Colonic mucosa (tissue), 4 donors: ENCODE measurements at regions of chr15 and their contacts with region 1.

Region 1: DNA sequence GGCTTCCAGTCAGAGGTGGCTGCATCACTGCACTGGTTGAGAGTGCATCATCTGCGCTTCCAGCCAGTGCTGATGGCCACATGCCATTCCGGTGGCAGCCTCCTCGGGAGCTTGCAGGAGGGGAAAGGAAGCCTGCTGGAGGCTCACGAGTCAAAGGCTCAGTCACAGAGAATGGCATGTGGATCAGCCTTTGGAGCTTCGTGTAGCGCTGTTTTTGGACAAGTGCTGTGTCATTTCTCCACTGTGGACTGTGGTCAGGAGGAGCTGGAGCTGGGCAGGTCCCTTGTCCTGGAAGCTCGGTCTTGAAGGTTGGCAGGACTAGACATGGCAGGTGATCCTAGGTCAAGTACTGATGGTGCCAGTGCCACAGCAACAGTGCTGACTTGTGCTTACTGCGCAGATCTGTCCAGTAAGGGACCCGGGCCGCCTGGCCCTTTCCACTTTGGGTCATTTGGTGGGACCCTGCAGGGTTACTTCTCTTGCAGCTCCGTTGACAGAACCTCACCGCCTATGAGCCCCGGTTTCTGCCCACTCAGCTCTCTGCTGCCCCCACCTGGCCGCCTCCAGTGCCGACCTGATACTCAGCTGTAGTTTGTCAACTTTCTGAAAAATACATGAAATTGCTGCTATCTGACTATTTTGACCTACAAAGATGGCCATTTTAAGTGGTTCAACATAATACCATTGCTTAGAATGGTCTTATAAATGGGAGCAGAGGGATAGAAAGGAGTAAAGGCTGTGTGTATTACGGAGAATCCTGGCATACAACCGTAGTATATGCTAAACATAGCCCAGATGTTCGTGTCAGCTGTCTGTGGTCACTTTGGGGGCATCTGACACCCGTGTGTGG is 27.6 kb upstream of the TRPM1 start:
- DNase-seq: peak; percentile 81
- H3K4me3 ChIP-seq: no peak overlapping the region
- H3K27ac ChIP-seq: no peak overlapping the region
- H3K4me1 ChIP-seq: no peaks in the 10 kb centered on the region
- H3K27me3 ChIP-seq: no peaks in the 10 kb centered on the region
- CTCF ChIP-seq: peak; percentile 90

Region 2: DNA sequence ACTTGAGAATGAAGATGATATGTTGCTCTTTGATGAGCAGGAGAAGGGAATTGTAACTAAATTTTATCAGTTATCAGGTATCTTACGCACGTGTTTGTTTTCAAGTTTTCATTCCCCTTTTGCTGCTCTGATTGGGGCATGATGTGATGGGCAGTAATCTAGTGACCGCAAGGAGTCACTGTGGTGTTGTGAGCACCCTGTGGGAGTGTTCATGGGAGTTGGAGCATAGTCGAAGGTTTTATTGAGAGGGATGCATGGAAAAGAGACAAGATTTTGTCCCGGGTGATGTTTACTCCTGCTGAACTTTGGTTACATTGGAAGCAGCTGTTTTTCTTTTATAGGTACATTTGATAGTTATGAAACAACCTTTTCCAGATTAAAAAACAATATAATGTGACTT is 223.3 kb before region 1 on chr15:
- intact Hi-C with region 1: loop called (anchors 5 kb)
- DNase-seq: peak; percentile 63
- H3K4me3 ChIP-seq: no peak overlapping the region
- H3K27ac ChIP-seq: peak overlapping the region; percentile 30
- H3K4me1 ChIP-seq: no peaks in the 10 kb centered on the region
- H3K27me3 ChIP-seq: no peaks in the 10 kb centered on the region
- CTCF ChIP-seq: peak; percentile 17

Region 3: GRCh38 chr15:30985081-30985531 is 144.0 kb before region 1 on chr15:
- intact Hi-C with region 1: loop called (anchors 10 kb)
- DNase-seq: no peak
- H3K4me3 ChIP-seq: no peak overlapping the region
- H3K27ac ChIP-seq: no peak overlapping the region
- H3K4me1 ChIP-seq: peaks cover 11% of the 10 kb centered on the region
- H3K27me3 ChIP-seq: no peaks in the 10 kb centered on the region
- CTCF ChIP-seq: no peak

Region 4: GRCh38 chr15:31280046-31280830 is 151.1 kb after region 1 on chr15:
- intact Hi-C with region 1: no loop called
- DNase-seq: peak; percentile 22
- H3K4me3 ChIP-seq: no peak overlapping the region
- H3K27ac ChIP-seq: no peak overlapping the region
- H3K4me1 ChIP-seq: peaks cover 5% of the 10 kb centered on the region
- H3K27me3 ChIP-seq: no peaks in the 10 kb centered on the region
- CTCF ChIP-seq: no peak